ENCODE measurements at regions of chr18 and their contacts with region 1.

Region 1: GRCh38 chr18:48951448-48952286 is 902 bp upstream of the SMAD7 start:
- DNase-seq: peak; percentile 61
- ATAC-seq: peak; percentile 39
- H3K4me3 ChIP-seq: peak overlapping the region; percentile 73
- H3K27ac ChIP-seq: peak overlapping the region; percentile 74
- H3K4me1 ChIP-seq: peaks cover 13% of the 10 kb centered on the region
- H3K27me3 ChIP-seq: no peaks in the 10 kb centered on the region
- CTCF ChIP-seq: no peak

Region 2: GRCh38 chr18:48834413-48835031 is 117.1 kb before region 1 on chr18:
- CTCF ChIA-PET with region 1: no interaction called
- POLR2A ChIA-PET with region 1: no interaction called
- intact Hi-C with region 1: loop called (anchors 5 kb)
- DNase-seq: peak; percentile 84
- ATAC-seq: peak; percentile 74
- H3K4me3 ChIP-seq: peak overlapping the region; percentile 51; the same call in 1 of the 2 replicates
- H3K27ac ChIP-seq: peak overlapping the region; percentile 83
- H3K4me1 ChIP-seq: peaks cover 43% of the 10 kb centered on the region
- H3K27me3 ChIP-seq: no peaks in the 10 kb centered on the region
- CTCF ChIP-seq: no peak

Region 3: GRCh38 chr18:48997985-48998831 is 46.5 kb after region 1 on chr18:
- CTCF ChIA-PET with region 1: interaction called, 11 read pairs
- POLR2A ChIA-PET with region 1: interaction called, 16 read pairs
- intact Hi-C with region 1: loop called (anchors 1 kb)
- DNase-seq: peak; percentile 84
- ATAC-seq: peak; percentile 72
- H3K4me3 ChIP-seq: no peak overlapping the region
- H3K27ac ChIP-seq: peak overlapping the region; percentile 96
- H3K4me1 ChIP-seq: peaks cover 37% of the 10 kb centered on the region
- H3K27me3 ChIP-seq: no peaks in the 10 kb centered on the region
- CTCF ChIP-seq: no peak

Region 4: DNA sequence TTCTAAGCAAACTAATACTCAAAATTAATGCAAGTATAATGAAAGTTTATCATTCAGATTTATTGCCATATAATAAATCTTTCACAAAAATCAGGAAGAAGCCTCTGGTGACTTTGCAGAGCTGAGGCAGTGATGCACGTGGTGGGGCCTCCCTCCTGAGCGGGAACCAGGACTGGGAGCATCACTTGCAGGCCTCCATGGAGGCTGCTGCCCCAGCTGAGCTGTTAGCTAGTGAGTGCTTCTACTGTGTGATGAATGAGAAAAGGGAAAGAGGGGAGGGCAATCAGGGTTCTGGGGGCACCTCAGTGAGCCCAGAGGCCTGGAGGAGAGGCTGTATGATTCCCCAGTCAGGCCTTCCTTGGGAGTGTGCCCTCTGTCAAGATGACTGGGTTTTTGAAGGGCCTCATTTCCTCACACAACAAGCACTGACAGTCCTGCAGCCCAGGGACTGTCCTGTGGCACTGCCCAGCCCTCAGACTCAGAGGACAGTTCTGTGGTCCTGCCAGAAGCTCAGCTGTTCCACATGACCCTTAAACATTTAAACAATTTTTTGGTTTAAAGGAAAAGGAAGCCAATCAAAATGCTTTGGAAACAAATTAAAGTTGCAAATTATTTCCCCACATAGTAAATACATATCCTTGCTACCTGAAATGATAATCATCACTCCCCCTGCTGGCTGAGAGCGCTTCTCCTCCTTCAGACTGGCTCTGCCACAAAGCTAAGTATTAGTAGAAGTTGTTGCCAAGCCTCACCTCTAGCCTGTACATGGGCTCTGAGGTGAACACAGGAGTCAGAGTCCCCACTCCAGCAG is 90.0 kb after region 1 on chr18:
- CTCF ChIA-PET with region 1: no interaction called
- POLR2A ChIA-PET with region 1: interaction called, 3 read pairs
- intact Hi-C with region 1: loop called (anchors 10 kb)
- DNase-seq: peak; percentile 46
- ATAC-seq: peak; percentile 78
- H3K4me3 ChIP-seq: no peak overlapping the region
- H3K27ac ChIP-seq: no peak overlapping the region
- H3K4me1 ChIP-seq: no peaks in the 10 kb centered on the region
- H3K27me3 ChIP-seq: no peaks in the 10 kb centered on the region
- CTCF ChIP-seq: peak; percentile 54

Region 5: DNA sequence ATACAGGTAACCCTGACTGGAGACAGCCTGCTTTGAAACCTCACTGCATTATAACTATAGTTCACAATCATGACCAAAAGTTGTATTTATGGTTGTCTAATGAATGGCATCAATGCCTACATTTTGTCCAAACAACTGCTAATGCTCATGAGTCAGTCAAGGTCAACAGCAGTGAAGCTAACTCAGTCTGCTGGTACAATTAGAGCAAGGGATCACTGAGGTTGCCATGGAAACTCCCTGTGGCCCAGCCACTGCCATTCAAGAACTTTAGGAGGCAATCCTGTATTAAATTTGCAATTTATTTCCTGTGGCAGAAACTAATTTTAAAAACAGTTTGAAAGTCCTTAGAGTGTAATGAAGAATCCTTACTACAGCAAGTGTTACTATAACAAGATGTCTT is 184.2 kb after region 1 on chr18:
- CTCF ChIA-PET with region 1: no interaction called
- POLR2A ChIA-PET with region 1: interaction called, 18 read pairs
- intact Hi-C with region 1: no loop called
- DNase-seq: peak; percentile 22
- ATAC-seq: peak; percentile 69; the same call in 1 of the 2 replicates
- H3K4me3 ChIP-seq: no peak overlapping the region
- H3K27ac ChIP-seq: no peak overlapping the region
- H3K4me1 ChIP-seq: no peaks in the 10 kb centered on the region
- H3K27me3 ChIP-seq: no peaks in the 10 kb centered on the region
- CTCF ChIP-seq: no peak

Region 6: DNA sequence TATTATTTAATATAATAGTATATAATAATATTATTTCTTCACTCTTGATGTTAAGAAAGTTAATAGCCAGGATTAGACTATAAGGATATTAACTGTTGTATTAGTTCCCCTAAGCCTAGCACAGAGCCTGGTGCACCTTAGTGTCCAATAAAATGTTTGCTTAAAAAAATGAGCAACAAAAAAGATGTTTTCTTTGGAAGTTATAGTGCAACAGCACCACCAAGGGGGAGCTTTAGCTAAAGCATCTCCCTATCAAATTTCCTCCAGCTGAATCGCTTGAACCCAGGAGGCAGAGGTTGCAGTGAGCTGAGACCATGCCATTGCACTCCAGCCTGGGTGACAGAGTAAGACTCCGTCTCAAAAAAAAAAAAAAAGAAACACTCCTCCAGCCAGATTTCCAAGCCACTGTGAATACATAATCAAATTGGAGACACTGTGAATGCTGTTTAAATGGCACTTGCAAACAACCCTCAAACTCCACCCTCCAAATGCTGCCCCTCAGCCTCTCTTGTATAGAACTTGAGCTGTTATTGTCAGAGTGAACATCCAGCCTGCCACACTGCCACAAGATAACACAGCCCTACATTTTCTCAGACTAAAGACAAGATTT is 286.9 kb after region 1 on chr18:
- CTCF ChIA-PET with region 1: no interaction called
- POLR2A ChIA-PET with region 1: no interaction called
- intact Hi-C with region 1: loop called (anchors 5 kb)
- DNase-seq: peak; percentile 35
- ATAC-seq: no peak
- H3K4me3 ChIP-seq: no peak overlapping the region
- H3K27ac ChIP-seq: no peak overlapping the region
- H3K4me1 ChIP-seq: no peaks in the 10 kb centered on the region
- H3K27me3 ChIP-seq: no peaks in the 10 kb centered on the region
- CTCF ChIP-seq: peak; percentile 51

Measured in PC-3 (cell line).